ENCODE measurements at regions of chr19 and their contacts with region 1.

Region 1: GRCh38 chr19:7197760-7198696 is 96.2 kb downstream of the INSR start:
- DNase-seq: peak; percentile 94 to 97
- ATAC-seq: peak; percentile 89 to 95 (median 91)
- H3K4me3 ChIP-seq: peak overlapping the region; percentile 76
- H3K27ac ChIP-seq: peak overlapping the region; percentile 86
- H3K4me1 ChIP-seq: peaks cover 16% of the 10 kb centered on the region
- H3K27me3 ChIP-seq: no peaks in the 10 kb centered on the region
- CTCF ChIP-seq: peak; percentile 35

Region 2: GRCh38 chr19:7098701-7099596 is 99.1 kb before region 1 on chr19:
- intact Hi-C with region 1: no loop called
- DNase-seq: peak; percentile 93 to 97
- ATAC-seq: peak; percentile 95 to 98 (median 96)
- H3K4me3 ChIP-seq: peak overlapping the region; percentile 89
- H3K27ac ChIP-seq: peak overlapping the region; percentile 97
- H3K4me1 ChIP-seq: peaks cover 5% of the 10 kb centered on the region
- H3K27me3 ChIP-seq: no peaks in the 10 kb centered on the region
- CTCF ChIP-seq: no peak

Region 3: GRCh38 chr19:7159105-7159933 is 38.7 kb before region 1 on chr19:
- intact Hi-C with region 1: loop called (anchors 5 kb)
- DNase-seq: peak; percentile 76 to 90
- ATAC-seq: peak; percentile 95 to 98 (median 97)
- H3K4me3 ChIP-seq: peak overlapping the region; percentile 39
- H3K27ac ChIP-seq: peak overlapping the region; percentile 83
- H3K4me1 ChIP-seq: peaks cover 12% of the 10 kb centered on the region
- H3K27me3 ChIP-seq: no peaks in the 10 kb centered on the region
- CTCF ChIP-seq: no peak